ENCODE measurements at regions of chr11 and their contacts with region 1.

Region 1: DNA sequence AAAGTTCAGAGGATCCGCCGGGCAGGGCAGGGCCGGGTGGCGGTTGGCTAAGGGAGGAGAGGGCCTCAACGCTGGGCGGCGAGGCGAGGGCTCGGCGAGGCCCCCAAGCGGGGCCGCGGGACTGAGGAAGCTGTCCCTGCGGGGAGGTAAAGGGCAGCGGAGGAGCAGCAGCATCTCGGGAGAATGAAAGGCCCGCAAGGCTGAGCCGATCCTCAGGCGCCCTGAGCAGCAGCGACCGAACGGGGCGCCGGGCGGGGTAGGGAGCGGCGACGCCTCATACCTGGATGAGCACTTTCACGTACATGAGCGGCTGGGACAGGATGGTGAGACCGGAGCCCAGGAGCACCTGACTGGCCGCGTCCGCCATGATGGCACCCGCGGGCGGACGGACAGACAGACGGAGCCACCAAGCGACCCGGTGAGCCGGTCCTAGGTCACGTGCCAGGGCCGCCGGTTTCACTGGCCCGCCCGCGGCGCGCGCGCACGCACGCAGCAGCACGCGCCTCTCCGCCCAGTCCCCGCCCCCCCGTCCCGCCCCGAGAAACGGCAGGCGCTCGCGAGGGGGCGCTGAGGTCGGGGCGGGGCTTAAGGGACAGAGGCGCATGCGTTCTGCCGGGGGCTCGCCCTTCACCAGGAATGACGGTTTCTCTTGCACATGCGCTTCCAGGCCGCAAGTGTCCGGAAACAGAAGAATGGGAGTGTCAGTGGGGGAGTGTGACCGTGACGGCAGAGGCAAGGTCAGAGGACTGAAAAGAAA is at the start of gene MTCH2:
- DNase-seq: peak; percentile 95
- ATAC-seq: peak; percentile 94
- H3K4me3 Mint-ChIP-seq: peak within 1 kb of the TSS; percentile 94
- H3K27ac Mint-ChIP-seq: peak within 1 kb of the TSS; percentile 95
- H3K4me1 Mint-ChIP-seq: peaks cover 25% of the 10 kb centered on the region
- H3K27me3 Mint-ChIP-seq: no peaks in the 10 kb centered on the region
- CTCF ChIP-seq: no peak
- total RNA-seq, gene MTCH2: 73.3 and 81.7 TPM in 2 replicates

Region 2: GRCh38 chr11:46593550-46594373 is 1048.5 kb before region 1 on chr11 and contains the start of gene AMBRA1:
- CTCF ChIA-PET with region 1: no interaction called
- POLR2A ChIA-PET with region 1: no interaction called
- intact Hi-C with region 1: loop called (anchors 10 kb)
- DNase-seq: peak; percentile 77
- ATAC-seq: peak; percentile 93
- H3K4me3 Mint-ChIP-seq: peak within 1 kb of the TSS; percentile 97
- H3K27ac Mint-ChIP-seq: peak within 1 kb of the TSS; percentile 88
- H3K4me1 Mint-ChIP-seq: peaks cover 43% of the 10 kb centered on the region
- H3K27me3 Mint-ChIP-seq: no peaks in the 10 kb centered on the region
- CTCF ChIP-seq: no peak
- total RNA-seq, gene AMBRA1: 35.5 and 39.1 TPM in 2 replicates

Region 3: DNA sequence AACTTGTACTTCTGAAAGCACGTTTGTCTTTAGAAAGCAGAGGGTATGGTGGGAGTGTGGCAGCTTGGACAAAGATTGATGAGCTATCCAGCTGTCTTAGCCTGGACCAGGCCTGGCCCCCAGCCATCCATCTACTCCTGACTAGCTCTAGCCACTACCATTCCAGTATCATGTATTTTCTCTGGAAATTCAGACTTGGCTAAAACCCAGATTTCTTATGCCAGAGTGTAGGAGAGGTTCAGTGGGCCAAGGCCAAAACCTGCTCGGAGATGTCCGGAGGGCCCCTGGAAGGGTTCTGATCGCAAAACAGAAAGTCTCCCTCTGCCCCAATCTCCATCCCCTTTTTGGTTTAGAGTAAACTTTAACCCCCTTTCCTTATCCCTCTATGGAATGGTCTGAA is 24.9 kb after region 1 on chr11:
- CTCF ChIA-PET with region 1: no interaction called
- POLR2A ChIA-PET with region 1: no interaction called
- intact Hi-C with region 1: loop called (anchors 1 kb)
- DNase-seq: no peak
- ATAC-seq: no peak
- H3K4me3 Mint-ChIP-seq: no peak overlapping the region
- H3K27ac Mint-ChIP-seq: no peak overlapping the region
- H3K4me1 Mint-ChIP-seq: peaks cover 4% of the 10 kb centered on the region
- H3K27me3 Mint-ChIP-seq: no peaks in the 10 kb centered on the region
- CTCF ChIP-seq: no peak

Region 4: DNA sequence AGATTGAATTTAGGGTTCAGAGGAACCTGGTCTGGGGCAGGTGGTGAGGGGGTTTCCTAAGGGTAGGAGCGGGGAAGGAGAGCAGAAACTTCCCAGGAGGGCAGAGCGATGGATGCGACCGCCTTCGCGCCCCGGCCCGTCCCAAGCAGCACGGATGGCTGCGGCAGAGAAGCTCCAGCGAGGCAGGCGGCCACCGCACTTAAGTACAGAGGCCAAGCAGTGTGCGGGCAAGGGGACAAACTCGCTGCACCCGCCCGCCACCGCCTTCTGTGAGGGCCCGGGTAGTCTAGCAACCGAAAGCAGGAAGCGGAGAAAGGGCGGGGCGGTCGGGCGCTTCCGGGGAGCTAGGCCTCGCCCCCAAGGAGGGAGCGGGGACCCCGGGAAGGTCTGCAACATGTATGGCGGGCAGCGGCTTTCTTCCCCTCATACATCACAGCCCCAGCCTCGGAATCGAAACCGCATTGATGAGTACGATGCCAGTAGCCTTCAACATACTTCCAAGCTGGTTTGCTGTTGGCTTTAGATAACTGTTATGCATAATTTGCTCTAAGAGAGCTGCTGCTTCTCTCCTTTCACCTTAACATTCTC is 72.9 kb after region 1 on chr11 and contains the start of gene AGBL2:
- CTCF ChIA-PET with region 1: no interaction called
- POLR2A ChIA-PET with region 1: interaction called, 15 read pairs
- intact Hi-C with region 1: loop called (anchors 1 kb)
- DNase-seq: peak; percentile 82
- ATAC-seq: peak; percentile 99
- H3K4me3 Mint-ChIP-seq: peak within 1 kb of the TSS; percentile 96
- H3K27ac Mint-ChIP-seq: peak within 1 kb of the TSS; percentile 97
- H3K4me1 Mint-ChIP-seq: peaks cover 11% of the 10 kb centered on the region
- H3K27me3 Mint-ChIP-seq: no peaks in the 10 kb centered on the region
- CTCF ChIP-seq: no peak
- total RNA-seq, gene AGBL2: 7.0 and 8.2 TPM in 2 replicates